ENCODE measurements at regions of chr12 and their contacts with region 1.

Region 1: DNA sequence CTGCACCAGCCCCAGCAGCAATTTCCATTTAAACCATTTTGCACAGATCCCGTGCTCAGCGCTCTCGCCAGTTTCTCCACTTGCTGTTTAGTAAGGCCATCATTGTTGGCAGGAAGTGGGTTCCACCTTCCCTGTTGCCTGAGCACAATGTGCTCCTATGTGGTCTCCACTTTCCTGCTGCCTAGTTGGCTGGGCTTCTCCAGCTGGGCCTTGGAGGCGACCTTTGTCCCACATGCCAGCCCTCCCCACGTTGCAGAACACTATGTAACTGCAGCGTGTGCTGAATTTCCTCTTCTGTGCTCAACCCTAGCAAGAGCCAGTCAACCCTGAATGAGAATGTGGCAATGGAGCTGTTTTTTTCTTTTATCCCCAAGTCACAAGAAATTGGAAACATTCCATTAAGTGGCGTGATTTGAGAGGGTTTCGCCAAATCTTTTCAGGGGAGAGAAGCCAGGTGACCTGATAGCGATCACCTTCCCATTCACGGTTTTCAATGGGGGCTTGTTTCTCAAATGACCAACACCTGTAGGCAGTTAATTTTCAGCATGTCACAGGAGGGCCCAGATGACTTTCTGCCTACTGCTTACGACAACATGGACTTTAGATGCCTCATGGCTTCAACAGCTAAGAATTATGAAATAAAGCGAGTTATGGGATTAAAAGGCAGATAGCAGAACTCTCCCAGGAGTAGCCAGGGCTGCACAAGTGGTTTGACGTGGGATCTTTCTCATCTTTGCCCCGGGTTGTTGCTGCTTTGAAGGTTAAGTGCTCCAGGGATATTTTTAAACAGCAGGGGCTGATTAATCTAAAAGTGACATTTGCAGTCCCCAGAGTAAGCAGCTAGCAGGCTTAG is at the start of gene ACACB:
- DNase-seq: peak in 2 of 3 donors; percentile 48 to 57
- H3K4me3 ChIP-seq: peak within 1 kb of the TSS in 3 of 7 experiments; percentile 22 to 52 (median 45)
- H3K27ac ChIP-seq: no peak within 1 kb of the TSS
- H3K4me1 ChIP-seq: peaks cover 5 to 26% (median 15%) of the 10 kb centered on the region in 4 experiments
- H3K27me3 ChIP-seq: no peaks in the 10 kb centered on the region

Region 2: DNA sequence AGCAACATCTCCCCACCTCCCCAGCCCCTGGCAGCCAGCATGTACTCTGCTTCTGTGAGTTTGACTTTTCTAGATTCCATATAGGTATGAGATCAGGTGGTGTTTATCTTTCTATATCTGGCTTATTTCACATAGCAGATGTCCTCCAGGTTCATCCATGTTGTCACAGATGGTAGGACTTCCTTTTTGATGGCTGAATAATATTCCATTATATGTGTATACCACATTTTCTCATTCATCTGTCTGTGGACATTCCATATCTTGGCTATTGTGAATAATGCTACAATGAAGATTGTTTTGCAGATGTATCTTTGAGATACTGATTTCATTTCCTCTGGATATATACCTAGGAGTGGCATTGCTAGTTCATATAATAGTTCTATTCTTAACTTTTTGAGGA is 41.1 kb before region 1 on chr12:
- CTCF ChIA-PET with region 1: no interaction called
- POLR2A ChIA-PET with region 1: no interaction called
- DNase-seq: no peak
- H3K4me3 ChIP-seq: no peak overlapping the region
- H3K27ac ChIP-seq: no peak overlapping the region
- H3K4me1 ChIP-seq: no peaks in the 10 kb centered on the region
- H3K27me3 ChIP-seq: no peaks in the 10 kb centered on the region

Region 3: GRCh38 chr12:109098183-109099050 is 17.6 kb before region 1 on chr12:
- CTCF ChIA-PET with region 1: interaction called, 10 read pairs
- POLR2A ChIA-PET with region 1: no interaction called
- DNase-seq: peak; percentile 37 to 65 (median 54)
- H3K4me3 ChIP-seq: peak overlapping the region; percentile 78 to 93 (median 83)
- H3K27ac ChIP-seq: peak overlapping the region; percentile 19 to 64
- H3K4me1 ChIP-seq: peaks cover 3 to 23% (median 21%) of the 10 kb centered on the region in 4 experiments
- H3K27me3 ChIP-seq: no peaks in the 10 kb centered on the region

Region 4: GRCh38 chr12:109134186-109134917 is 18.4 kb after region 1 on chr12:
- CTCF ChIA-PET with region 1: interaction called, 9 read pairs
- POLR2A ChIA-PET with region 1: interaction called, 10 read pairs
- DNase-seq: no peak
- H3K4me3 ChIP-seq: no peak overlapping the region
- H3K27ac ChIP-seq: no peak overlapping the region
- H3K4me1 ChIP-seq: no peaks in the 10 kb centered on the region
- H3K27me3 ChIP-seq: no peaks in the 10 kb centered on the region

Region 5: DNA sequence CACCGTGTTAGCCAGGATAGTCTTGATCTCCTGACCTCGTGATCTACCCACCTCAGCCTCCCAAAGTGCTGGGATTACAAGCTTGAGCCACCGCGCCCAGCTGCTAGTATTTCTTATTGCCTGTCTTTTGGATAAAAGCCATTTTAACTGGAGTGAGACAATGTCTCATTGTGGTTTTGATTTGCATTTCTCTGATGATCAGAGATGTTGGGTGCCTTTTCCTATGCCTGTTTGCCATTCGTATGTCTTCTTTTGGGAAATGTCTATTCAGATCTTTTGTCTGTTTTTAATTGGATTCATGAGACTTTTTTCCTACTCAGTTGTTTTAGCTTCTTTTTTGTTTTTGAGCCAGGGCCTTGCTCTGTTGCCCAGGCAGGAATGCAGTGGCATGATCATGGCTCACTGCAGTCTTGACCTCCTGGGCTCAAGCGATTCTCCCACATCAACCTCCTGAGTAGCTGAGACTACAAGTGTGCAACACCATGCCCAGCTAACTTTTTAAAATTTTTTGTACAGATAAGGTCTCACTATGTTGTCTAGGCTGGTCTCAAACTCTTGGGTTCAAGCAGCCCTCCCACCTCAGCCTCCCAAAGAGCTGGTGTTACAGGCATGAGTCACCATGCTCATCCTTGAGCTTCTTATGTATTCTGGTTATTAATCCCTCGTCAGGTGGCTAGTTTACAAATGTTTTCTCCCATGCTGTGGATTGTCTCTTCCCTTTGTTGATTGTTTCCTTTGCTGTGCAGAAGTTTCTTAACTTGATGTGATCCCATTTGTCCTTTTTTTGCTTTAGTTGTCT is 66.3 kb after region 1 on chr12:
- CTCF ChIA-PET with region 1: no interaction called
- POLR2A ChIA-PET with region 1: no interaction called
- DNase-seq: no peak
- H3K4me3 ChIP-seq: no peak overlapping the region
- H3K27ac ChIP-seq: no peak overlapping the region
- H3K4me1 ChIP-seq: no peaks in the 10 kb centered on the region
- H3K27me3 ChIP-seq: no peaks in the 10 kb centered on the region

Measured in common myeloid progenitor, CD34-positive (primary cell).